ENCODE measurements at regions of chr3 and their contacts with region 1.

Region 1: DNA sequence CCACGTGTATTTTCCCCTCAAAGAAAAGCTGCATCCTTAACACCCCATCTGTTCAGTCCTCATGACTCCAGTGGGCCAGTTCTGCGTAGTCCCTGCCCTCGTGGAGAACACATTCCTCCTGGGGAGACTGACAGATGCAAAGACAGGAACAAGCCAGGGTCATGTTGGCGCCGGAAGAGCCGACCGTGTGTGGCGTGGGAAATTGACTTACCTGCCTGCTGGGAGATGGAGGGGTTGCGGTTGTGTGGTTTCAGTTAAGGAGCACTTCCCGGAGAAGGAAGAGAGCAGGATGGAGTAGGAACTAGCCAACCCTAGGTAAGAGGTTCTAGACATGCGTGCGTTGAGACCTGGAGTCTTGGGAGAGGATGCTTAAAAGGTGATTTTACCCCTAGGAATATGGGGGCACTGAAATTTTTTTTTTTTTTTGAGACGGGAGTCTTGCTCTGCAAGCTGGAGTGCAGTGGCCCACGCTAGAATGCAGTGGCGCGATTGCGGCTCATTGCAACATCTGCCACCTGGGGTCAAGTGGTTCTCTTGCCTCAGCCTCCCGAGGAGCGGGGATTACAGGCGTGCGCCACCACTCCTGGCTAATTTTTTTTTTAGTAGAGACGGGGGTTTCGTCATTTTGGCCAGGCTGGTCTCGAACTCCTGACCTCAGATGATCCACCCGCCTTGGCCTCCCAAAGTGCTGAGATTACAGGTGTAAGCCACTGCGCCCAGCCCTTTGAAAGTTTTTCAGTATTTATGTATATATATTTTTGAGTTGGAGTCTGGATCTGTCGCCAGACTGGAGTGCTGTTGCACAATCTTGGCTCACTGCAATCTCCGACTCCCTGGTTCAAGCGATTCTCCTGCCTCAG is 1.4 kb downstream of the VHL start:
- DNase-seq: peak; percentile 34 to 68 (median 42)
- ATAC-seq: peak; percentile 66
- H3K4me3 ChIP-seq: peak overlapping the region; percentile 61
- H3K27ac ChIP-seq: peak overlapping the region; percentile 84
- H3K4me1 ChIP-seq: peaks cover 15 to 27% of the 10 kb centered on the region in 2 experiments; a peak in 4 of 5 replicates
- H3K27me3 ChIP-seq: no peaks in the 10 kb centered on the region
- CTCF ChIP-seq: no peak
- EP300 ChIP-seq: peak; percentile 64
- POLR2A ChIP-seq: no peak; the same call in 1 of the 2 replicates
- RAD21 ChIP-seq: no peak; a peak in 1 of 4 replicates

Region 2: DNA sequence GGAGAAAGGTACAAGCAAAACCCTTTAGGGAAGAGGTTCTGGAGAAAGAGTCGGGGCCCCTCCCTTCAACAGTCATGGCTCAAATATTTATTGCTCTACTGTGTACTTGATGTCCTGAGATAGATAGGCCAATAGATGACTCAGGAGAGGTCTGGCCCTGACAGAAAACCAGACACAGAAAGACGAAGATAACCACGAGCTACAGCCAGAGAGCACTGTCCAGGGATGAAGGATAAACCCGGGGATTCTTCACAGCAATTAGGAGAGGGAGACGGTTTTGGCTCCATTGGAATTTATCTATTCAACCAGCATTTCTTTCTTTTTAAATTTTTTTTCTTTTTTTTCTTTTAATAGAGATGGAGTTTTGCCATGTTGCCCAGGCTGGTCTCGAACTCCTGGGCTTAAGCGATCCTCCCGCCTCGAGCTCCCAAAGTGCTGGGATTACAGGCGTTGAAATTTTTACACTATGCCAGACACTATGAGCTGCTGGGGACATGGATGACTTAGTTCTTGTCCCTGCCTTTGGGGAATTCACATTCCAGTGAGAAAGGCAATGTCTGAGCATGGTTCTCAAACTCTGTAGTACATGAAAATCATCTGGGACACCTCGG is 258.3 kb before region 1 on chr3:
- CTCF ChIA-PET with region 1: no interaction called
- POLR2A ChIA-PET with region 1: no interaction called
- in situ Hi-C with region 1: no loop called
- intact Hi-C with region 1: no loop called
- DNase-seq: peak; percentile 83 to 86 (median 86)
- ATAC-seq: peak; percentile 92
- H3K4me3 ChIP-seq: no peak overlapping the region
- H3K27ac ChIP-seq: peak overlapping the region; percentile 21; the same call in 1 of the 3 replicates
- H3K4me1 ChIP-seq: peaks cover 8 to 34% of the 10 kb centered on the region in 2 experiments; a peak in 4 of 5 replicates
- H3K27me3 ChIP-seq: no peaks in the 10 kb centered on the region
- CTCF ChIP-seq: 0 out of 6 replicates have a peak, but pooled peaks of 1 of the 3 experiments have one; percentile 8
- EP300 ChIP-seq: peak; percentile 64
- POLR2A ChIP-seq: no peak
- RAD21 ChIP-seq: peak in 1 of 2 experiments; percentile 15; a peak in 1 of 4 replicates

Region 3: DNA sequence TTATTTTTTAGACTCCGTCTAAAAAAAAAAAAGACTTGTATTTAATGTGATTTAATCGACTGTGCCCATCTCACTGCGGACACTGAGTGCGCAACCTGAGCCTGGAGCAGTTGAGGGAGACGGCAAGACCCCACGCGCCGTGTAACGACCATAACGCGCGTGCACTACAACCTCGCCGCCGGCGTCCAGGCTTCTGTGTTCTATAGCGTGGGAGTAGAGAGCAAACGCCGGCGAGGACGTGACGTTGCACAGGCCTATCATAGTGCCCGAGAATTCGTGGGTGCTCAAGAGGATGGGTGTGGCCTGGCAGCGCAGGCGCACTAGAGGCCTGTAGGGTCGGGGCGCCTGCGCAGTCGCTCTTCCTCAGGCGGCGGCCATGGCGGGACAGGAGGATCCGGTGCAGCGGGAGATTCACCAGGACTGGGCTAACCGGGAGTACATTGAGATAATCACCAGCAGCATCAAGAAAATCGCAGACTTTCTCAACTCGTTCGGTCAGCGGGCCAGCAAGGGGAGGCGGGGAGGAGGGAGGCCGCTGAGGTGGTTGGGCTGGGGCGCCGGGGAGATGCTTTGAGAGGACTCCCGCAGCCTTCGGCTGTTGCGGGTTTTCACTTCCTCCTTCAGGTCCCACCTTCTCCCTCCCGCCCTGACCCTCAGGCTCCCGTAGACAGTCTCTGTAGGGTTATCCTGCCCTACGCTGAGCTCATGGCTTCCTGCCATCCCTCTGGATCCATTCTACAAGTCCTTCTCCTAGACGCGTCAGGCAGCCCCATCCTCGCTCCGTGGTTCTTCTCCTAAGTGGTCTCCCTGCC is 27.4 kb before region 1 on chr3 and contains the start of gene BRK1:
- CTCF ChIA-PET with region 1: no interaction called
- POLR2A ChIA-PET with region 1: interaction called, 5 read pairs
- in situ Hi-C with region 1: no loop called
- intact Hi-C with region 1: loop called (anchors 1 kb)
- DNase-seq: peak; percentile 99 to 100 (median 100)
- ATAC-seq: peak; percentile 95
- H3K4me3 ChIP-seq: peak within 1 kb of the TSS; percentile 67
- H3K27ac ChIP-seq: peak within 1 kb of the TSS; percentile 78
- H3K4me1 ChIP-seq: peaks cover 9 to 14% of the 10 kb centered on the region in 2 experiments; a peak in 3 of 5 replicates
- H3K27me3 ChIP-seq: no peaks in the 10 kb centered on the region
- CTCF ChIP-seq: no peak
- EP300 ChIP-seq: 0 out of 2 replicates have a peak, but pooled peaks have one; percentile 19
- POLR2A ChIP-seq: peak; percentile 99
- RAD21 ChIP-seq: 0 out of 4 replicates have a peak, but pooled peaks have one; percentile 10 to 12
- polyA plus RNA-seq, gene BRK1: 538 to 634 TPM

Region 4: DNA sequence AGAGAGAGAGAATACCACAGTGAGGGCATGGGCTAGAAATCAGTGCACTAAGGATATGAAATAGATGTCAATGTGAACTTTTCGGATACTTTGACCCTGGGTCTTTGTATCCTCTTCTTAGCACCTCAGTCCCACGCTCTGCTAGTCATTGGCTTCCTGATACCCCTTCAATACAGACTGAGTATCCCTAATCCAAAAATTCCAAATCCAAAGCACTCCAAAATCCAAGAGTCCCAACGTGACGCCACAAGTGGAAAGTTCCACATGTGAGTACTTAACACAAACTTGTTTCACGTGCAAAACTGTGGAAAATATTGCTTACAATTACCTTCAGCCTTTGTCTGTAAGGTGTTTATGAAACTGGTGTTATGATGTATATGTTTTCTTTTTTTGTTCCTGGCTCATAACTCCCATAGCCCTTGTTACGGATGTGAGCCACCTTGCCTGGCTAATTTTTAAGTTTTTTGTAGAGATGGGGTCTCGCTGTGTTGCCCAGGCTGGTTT is 11.4 kb after region 1 on chr3:
- CTCF ChIA-PET with region 1: no interaction called
- POLR2A ChIA-PET with region 1: interaction called, 25 read pairs
- in situ Hi-C with region 1: no loop called
- intact Hi-C with region 1: no loop called
- DNase-seq: no peak
- ATAC-seq: peak; percentile 59
- H3K4me3 ChIP-seq: no peak overlapping the region
- H3K27ac ChIP-seq: no peak overlapping the region
- H3K4me1 ChIP-seq: no peaks in the 10 kb centered on the region
- H3K27me3 ChIP-seq: no peaks in the 10 kb centered on the region
- CTCF ChIP-seq: no peak
- EP300 ChIP-seq: no peak
- POLR2A ChIP-seq: peak; percentile 53; the same call in 1 of the 2 replicates
- RAD21 ChIP-seq: no peak

Region 5: DNA sequence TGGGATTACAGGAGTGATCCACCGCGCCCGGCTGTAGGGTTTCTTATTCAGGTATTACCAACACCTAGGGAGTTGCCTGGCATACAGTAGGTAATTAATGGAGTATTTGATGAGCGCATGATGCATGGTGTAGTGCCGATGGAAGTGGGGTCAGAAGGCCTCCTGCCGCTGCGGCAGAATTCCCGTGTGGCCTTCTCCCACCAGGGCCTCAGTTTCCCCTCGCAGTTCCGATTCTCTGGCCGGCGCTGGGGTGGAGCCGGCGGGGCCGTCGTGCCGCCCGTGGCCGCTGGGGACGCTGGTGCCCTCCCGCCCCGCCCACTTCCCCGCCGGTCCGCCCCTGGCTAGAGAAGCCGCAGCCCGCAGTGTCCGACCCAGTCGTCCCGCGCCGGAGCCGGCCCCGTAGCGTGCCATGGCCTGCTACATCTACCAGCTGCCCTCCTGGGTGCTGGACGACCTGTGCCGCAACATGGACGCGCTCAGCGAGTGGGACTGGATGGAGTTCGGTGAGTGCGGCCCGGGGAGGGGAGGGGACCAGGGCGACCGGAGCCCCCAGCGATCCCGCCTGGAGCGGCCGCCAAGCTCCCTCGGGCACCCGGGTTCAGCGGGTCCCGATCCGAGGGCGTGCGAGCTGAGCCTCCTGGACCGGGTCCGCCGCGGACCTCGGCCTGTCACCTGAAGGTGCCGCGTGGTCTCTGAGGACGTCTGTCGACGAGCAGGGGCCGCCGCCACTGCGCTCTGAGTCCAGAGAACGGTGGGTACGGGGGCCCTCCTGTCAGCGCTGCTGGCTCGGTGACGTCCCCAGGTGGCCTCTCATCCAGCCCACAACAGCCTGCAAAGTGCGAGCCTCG is 21.8 kb after region 1 on chr3 and contains the start of gene IRAK2:
- CTCF ChIA-PET with region 1: no interaction called
- POLR2A ChIA-PET with region 1: interaction called, 10 read pairs
- in situ Hi-C with region 1: no loop called
- intact Hi-C with region 1: no loop called
- DNase-seq: peak; percentile 87 to 96 (median 94)
- ATAC-seq: peak; percentile 96
- H3K4me3 ChIP-seq: peak within 1 kb of the TSS; percentile 69
- H3K27ac ChIP-seq: peak within 1 kb of the TSS; percentile 41; the same call in 1 of the 3 replicates
- H3K4me1 ChIP-seq: peaks cover 0 to 17% of the 10 kb centered on the region in 2 experiments; a peak in 3 of 5 replicates
- H3K27me3 ChIP-seq: no peaks in the 10 kb centered on the region
- CTCF ChIP-seq: peak; percentile 72 to 83 (median 82)
- EP300 ChIP-seq: no peak
- POLR2A ChIP-seq: peak; percentile 64
- RAD21 ChIP-seq: peak; percentile 23 to 32
- polyA plus RNA-seq, gene IRAK2: 0.42 to 1.0 TPM

Measured in K562 (cell line).